HCT116 (cell line): ENCODE measurements at regions of chr1 and their contacts with region 1.

Region 1: DNA sequence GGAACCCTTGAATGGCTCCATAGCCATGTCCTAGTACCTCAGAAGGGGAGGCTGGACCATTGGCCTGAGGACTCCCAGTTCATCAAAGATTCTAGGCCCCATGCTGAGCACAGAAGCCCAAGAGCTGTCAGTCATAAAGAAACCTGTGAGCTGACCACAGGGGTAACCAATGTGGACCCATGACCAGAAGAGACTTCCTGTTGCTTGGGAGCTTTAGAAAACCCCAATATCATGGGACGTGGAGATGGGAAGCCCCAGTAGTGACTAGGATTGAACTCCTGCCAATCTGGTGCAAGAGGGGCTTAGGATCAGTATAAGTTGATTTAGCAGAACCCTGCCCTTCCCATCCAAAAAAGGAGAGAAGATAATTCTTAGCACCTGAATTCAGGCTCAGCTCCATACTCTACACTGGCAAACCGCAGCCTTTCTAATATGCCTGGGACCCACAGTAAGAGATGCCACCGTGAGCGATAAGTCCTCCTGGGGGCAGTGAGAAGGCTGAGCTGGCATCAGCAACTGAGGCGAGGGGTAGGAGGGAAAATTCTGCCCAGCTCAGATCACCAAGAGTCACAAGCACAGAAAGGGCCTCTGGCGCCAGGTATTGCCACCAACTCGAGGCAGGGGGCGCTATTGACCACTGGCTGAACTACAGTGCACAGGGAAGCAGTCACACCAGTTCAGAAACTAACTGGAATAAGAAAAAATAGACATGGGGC is 108.9 kb downstream of the CAPN8 start:
- DNase-seq: peak; percentile 35
- ATAC-seq: peak; percentile 99
- H3K4me3 ChIP-seq: no peak overlapping the region
- H3K27ac ChIP-seq: no peak overlapping the region
- H3K4me1 ChIP-seq: no peaks in the 10 kb centered on the region
- H3K27me3 ChIP-seq: no peaks in the 10 kb centered on the region
- CTCF ChIP-seq: peak; percentile 91 to 93 (median 93)
- POLR2A ChIP-seq: no peak
- RAD21 ChIP-seq: peak; percentile 95

Region 2: GRCh38 chr1:223133824-223134435 is 422.6 kb before region 1 on chr1:
- CTCF ChIA-PET with region 1: interaction called, 11 read pairs
- POLR2A ChIA-PET with region 1: no interaction called
- RAD21 ChIA-PET with region 1: no interaction called
- intact Hi-C with region 1: no loop called
- DNase-seq: peak; percentile 74
- ATAC-seq: peak; percentile 86
- H3K4me3 ChIP-seq: peak overlapping the region; percentile 31 to 50
- H3K27ac ChIP-seq: no peak overlapping the region
- H3K4me1 ChIP-seq: peaks cover 10 to 30% of the 10 kb centered on the region in 2 experiments
- H3K27me3 ChIP-seq: no peaks in the 10 kb centered on the region
- CTCF ChIP-seq: peak; percentile 82 to 93 (median 88)
- POLR2A ChIP-seq: no peak
- RAD21 ChIP-seq: peak; percentile 85

Region 3: DNA sequence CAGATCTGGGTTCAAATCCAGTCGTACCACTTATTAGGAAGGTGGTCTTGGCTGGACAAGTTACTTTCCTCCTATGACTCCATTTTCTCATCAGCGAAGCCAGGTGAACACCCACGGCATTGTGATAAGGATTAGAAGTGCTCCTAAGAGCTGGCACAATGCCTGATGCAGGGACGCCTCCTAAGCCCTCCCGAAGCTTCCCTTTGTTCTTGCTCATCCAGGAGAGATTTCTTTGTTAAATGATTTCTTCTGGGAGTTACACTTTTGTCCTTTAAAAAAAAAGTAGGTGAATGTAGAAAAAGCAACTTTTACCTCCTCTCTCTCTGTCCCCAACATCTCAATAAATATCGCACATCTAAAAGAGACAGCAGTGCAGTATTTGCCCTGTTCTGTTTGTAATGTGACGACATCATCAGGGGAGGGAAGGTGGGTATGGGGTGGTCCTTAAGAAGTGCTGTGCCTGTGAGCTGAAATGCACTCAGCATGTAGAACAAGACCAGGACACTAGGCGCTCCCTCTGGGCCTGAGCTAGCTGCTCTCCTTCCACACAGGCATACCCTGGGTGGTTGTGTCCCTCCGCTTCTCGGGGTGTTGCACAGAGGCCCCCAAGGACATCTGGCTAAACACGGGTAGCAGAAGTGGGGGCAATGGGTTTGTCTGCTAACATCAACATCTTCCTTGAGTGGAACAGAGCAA is 236.5 kb before region 1 on chr1:
- CTCF ChIA-PET with region 1: no interaction called
- POLR2A ChIA-PET with region 1: no interaction called
- RAD21 ChIA-PET with region 1: no interaction called
- intact Hi-C with region 1: no loop called
- DNase-seq: no peak
- ATAC-seq: peak; percentile 27; the same call in 1 of the 2 replicates
- H3K4me3 ChIP-seq: no peak overlapping the region
- H3K27ac ChIP-seq: no peak overlapping the region
- H3K4me1 ChIP-seq: no peaks in the 10 kb centered on the region
- H3K27me3 ChIP-seq: peaks cover 5% of the 10 kb centered on the region; the same call in 1 of the 2 replicates
- CTCF ChIP-seq: no peak
- POLR2A ChIP-seq: no peak
- RAD21 ChIP-seq: no peak

Region 4: DNA sequence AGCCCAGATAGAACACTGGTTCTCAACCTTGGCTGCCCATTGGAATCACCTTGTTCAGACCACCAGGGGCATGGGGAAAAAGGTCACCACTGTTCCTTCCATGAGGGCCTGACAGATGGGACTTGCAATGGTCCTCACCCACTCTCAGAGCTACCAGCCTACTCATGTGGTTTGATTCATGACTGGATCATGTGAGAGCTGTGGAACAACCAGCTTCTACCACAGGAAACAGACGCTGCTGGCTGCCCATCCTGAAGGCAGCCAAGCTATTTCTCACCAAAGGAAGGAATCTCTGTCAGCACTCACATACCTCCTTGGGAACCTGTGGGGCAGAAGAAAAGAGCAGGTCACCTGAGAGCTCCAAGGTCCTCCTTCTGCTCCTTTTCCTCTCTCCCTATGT is 55.4 kb after region 1 on chr1:
- CTCF ChIA-PET with region 1: interaction called, 78 read pairs
- POLR2A ChIA-PET with region 1: interaction called, 3 read pairs
- RAD21 ChIA-PET with region 1: no interaction called
- intact Hi-C with region 1: no loop called
- DNase-seq: no peak
- ATAC-seq: no peak
- H3K4me3 ChIP-seq: no peak overlapping the region
- H3K27ac ChIP-seq: no peak overlapping the region
- H3K4me1 ChIP-seq: no peaks in the 10 kb centered on the region
- H3K27me3 ChIP-seq: no peaks in the 10 kb centered on the region
- CTCF ChIP-seq: no peak
- POLR2A ChIP-seq: no peak
- RAD21 ChIP-seq: no peak

Region 5: DNA sequence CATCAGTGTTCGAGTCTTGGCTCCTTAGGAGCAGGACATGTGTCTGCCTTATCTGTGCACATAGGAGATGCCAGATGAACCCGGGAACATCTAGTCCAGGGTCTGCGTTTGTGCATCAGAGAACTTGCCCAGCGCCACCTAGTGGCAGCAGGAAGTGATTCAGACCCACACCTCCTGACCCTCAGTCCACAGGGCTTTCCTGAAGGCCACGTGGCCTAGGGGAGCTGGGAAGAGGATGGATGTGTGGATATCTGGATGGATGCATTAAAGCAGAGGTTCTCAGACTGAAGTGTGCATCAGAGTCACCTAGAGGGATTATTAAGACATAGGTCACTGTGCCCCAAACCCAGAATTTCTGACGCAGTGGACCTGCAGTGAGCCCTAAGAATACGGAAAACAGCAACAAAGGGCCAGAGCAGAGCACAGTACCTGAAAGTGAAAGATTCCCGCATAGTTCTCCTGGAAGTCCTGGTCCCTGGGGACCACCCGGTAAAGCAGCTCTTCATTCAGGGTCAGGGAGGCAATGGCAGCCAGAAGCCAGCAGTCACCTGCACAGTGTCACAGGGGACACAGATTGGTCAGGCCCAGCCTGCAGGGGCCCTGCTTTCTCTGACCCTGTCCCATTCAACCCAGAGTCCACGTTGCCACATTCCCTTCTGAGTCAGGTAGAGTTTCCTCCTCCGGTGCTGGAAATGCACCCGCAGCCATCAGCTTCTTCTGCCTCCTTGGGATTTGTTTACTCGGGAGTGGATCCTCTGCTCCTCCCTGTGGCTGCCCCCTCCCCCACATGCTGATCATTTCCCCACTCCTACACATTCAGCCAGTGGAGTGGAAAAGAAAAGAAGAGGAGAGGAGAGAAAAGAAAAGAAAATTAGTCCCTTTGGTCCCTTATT is 71.9 kb after region 1 on chr1:
- CTCF ChIA-PET with region 1: interaction called, 12 read pairs
- POLR2A ChIA-PET with region 1: no interaction called
- RAD21 ChIA-PET with region 1: no interaction called
- intact Hi-C with region 1: no loop called
- DNase-seq: peak; percentile 54
- ATAC-seq: peak; percentile 99
- H3K4me3 ChIP-seq: no peak overlapping the region
- H3K27ac ChIP-seq: no peak overlapping the region
- H3K4me1 ChIP-seq: peaks cover 0 to 3% of the 10 kb centered on the region in 2 experiments; a peak in 1 of 4 replicates
- H3K27me3 ChIP-seq: no peaks in the 10 kb centered on the region; the same call in 1 of the 2 replicates
- CTCF ChIP-seq: peak; percentile 51 to 93 (median 86); a peak in 5 of 6 replicates
- POLR2A ChIP-seq: no peak
- RAD21 ChIP-seq: peak; percentile 46

Region 6: DNA sequence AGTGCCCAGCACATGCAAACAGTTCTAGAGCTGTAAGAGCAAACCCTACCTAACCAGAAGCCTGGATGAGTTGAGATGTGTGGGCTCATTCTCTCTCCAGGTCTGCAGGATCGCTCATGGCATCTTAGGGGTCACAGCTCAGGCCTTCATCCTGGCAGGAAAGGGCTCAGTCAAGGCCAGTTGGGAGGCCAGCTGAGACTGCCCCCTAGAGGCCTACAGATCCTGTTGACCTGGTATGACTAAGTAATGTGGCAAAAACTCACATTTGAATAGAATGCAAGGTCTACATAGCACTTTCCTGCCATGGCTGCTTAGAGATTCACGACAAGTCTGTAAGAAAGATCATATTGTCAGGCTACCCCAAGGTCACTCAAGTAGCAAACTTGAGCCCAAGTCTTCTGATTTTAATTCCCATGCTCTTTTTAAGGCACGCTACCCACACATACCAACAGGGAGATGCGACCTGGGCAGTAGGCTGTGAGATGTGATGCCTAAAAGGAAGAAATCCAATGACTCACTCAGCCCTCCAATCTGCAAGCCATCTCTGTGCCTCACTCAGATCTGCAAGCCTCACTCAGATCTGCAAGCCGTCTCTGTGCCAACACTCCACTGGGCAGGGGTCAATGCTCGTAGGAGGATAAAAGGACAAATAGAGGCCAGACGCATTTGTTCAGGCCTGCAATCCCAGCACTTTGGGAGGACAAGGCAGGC is 114.0 kb after region 1 on chr1:
- CTCF ChIA-PET with region 1: interaction called, 11 read pairs
- POLR2A ChIA-PET with region 1: no interaction called
- RAD21 ChIA-PET with region 1: interaction called in 1 of 2 experiments, 5 read pairs
- intact Hi-C with region 1: no loop called
- DNase-seq: peak; percentile 36
- ATAC-seq: peak; percentile 90
- H3K4me3 ChIP-seq: no peak overlapping the region
- H3K27ac ChIP-seq: no peak overlapping the region
- H3K4me1 ChIP-seq: peaks cover 0 to 19% of the 10 kb centered on the region in 2 experiments; a peak in 3 of 4 replicates
- H3K27me3 ChIP-seq: no peaks in the 10 kb centered on the region
- CTCF ChIP-seq: peak; percentile 70 to 85 (median 74)
- POLR2A ChIP-seq: no peak
- RAD21 ChIP-seq: peak; percentile 86

Region 7: DNA sequence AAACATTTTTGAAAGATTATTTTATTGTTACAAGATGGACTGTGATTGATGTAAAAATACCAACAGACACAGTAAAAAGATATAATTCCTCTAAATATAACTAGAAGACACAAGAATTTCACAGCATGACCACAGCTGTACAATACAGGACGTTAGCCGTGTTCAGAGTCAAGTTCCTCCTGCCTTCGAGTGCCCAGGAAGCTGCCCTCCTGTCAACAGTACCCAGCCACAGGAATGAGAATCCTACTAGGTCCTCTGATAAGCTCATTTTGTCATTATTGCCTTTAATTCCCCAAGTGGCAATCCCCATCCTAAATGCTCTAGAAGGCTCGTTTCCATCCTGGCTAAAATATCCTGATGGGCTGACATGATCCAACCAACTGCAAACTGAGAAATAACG is 139.4 kb after region 1 on chr1:
- CTCF ChIA-PET with region 1: interaction called, 12 read pairs
- POLR2A ChIA-PET with region 1: no interaction called
- RAD21 ChIA-PET with region 1: no interaction called
- intact Hi-C with region 1: no loop called
- DNase-seq: no peak
- ATAC-seq: no peak
- H3K4me3 ChIP-seq: no peak overlapping the region
- H3K27ac ChIP-seq: no peak overlapping the region
- H3K4me1 ChIP-seq: peaks cover 11 to 32% of the 10 kb centered on the region in 2 experiments
- H3K27me3 ChIP-seq: no peaks in the 10 kb centered on the region
- CTCF ChIP-seq: no peak
- POLR2A ChIP-seq: no peak
- RAD21 ChIP-seq: no peak

Region 8: DNA sequence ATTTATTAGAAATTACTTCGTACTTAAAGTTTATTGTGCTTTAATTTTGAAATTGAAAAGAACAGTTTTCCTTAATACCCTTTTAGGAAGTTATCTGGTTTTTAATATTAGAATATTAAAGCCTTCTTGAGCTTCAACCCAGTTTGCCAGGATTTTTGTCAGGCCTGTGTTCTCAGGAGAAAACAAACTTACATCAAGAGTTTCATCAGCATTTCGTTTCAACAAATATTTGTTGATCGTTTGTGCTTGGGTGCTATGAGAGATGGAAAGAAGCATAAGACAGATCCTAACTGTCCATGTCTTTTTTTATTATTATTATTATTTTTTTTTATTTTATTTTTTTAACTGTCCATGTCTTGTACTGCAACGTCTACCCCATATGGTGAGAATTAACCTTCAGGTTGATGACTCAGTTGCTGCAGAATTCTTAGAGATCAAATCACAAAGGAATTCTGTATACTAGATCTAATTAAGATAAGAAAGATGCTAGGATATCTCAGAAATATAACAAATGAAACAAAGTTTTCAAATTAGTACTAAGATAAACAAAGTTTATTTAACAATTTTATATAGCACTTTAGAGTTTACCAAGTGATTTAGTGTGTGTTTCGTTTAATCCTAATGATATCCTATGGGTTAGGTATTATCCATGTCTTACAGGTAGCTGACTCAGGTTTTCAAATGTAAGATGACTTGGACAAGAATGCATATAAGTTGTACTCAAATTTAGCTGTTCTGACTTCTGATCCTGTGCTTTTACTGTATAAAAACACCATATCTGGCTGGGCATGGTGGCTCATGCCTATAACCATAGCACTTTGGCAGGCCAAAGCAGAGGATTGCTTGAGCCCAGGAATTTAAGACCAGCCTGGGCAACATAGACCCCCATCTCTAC is 571.6 kb after region 1 on chr1:
- CTCF ChIA-PET with region 1: no interaction called
- POLR2A ChIA-PET with region 1: no interaction called
- RAD21 ChIA-PET with region 1: no interaction called
- intact Hi-C with region 1: no loop called
- DNase-seq: no peak
- ATAC-seq: no peak
- H3K4me3 ChIP-seq: no peak overlapping the region
- H3K27ac ChIP-seq: no peak overlapping the region
- H3K4me1 ChIP-seq: peaks cover 0 to 6% of the 10 kb centered on the region in 2 experiments; a peak in 1 of 4 replicates
- H3K27me3 ChIP-seq: no peaks in the 10 kb centered on the region
- CTCF ChIP-seq: no peak
- POLR2A ChIP-seq: no peak
- RAD21 ChIP-seq: no peak